ENCODE measurements at regions of chr9 and their contacts with region 1.

Region 1: GRCh38 chr9:124126571-124127289 is 115.2 kb downstream of the LHX2 start:
- DNase-seq: peak; percentile 93
- H3K4me3 Mint-ChIP-seq: no peak overlapping the region
- H3K27ac Mint-ChIP-seq: peak overlapping the region; percentile 57
- H3K4me1 Mint-ChIP-seq: peaks cover 6% of the 10 kb centered on the region
- H3K27me3 Mint-ChIP-seq: peaks cover 2% of the 10 kb centered on the region

Region 2: GRCh38 chr9:124149992-124150391 is 23.3 kb after region 1 on chr9:
- intact Hi-C with region 1: no loop called
- DNase-seq: peak; percentile 50
- H3K4me3 Mint-ChIP-seq: no peak overlapping the region
- H3K27ac Mint-ChIP-seq: no peak overlapping the region
- H3K4me1 Mint-ChIP-seq: peaks cover 9% of the 10 kb centered on the region
- H3K27me3 Mint-ChIP-seq: peaks cover 24% of the 10 kb centered on the region

Region 3: DNA sequence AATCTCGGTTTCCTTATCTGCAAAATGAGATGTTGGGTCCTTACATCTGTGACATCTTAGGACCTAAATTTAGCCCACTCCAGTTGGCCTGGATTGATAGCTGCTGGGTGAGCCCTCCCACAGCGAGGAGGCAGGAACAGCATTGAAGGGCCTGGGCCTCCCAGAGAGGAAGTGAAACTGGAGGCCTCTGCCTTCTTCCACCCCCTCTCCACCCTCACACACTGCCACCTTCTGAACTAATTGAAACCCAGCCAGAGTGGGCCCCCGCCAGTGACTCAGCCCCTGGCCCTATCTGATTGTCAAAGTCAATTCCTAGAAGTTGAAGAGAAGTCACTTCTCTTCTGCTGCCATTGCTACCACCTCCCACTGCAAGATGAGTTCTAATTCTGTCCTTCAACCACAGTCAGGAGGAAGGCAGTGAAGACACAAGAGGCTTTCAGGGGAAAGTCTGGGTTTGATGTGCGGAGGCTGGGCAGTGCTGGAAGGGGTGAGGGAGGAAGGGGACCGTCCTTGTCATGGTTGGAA is 75.8 kb after region 1 on chr9:
- intact Hi-C with region 1: loop called (anchors 5 kb)
- DNase-seq: peak; percentile 91
- H3K4me3 Mint-ChIP-seq: peak overlapping the region; percentile 75
- H3K27ac Mint-ChIP-seq: peak overlapping the region; percentile 94
- H3K4me1 Mint-ChIP-seq: peaks cover 65% of the 10 kb centered on the region
- H3K27me3 Mint-ChIP-seq: no peaks in the 10 kb centered on the region

Region 4: GRCh38 chr9:124320062-124320973 is 193.6 kb after region 1 on chr9:
- intact Hi-C with region 1: loop called (anchors 1 kb)
- DNase-seq: peak; percentile 82
- H3K4me3 Mint-ChIP-seq: no peak overlapping the region
- H3K27ac Mint-ChIP-seq: no peak overlapping the region
- H3K4me1 Mint-ChIP-seq: peaks cover 10% of the 10 kb centered on the region
- H3K27me3 Mint-ChIP-seq: no peaks in the 10 kb centered on the region

Region 5: GRCh38 chr9:124381170-124381945 is 254.6 kb after region 1 on chr9:
- intact Hi-C with region 1: loop called (anchors 10 kb)
- DNase-seq: no peak
- H3K4me3 Mint-ChIP-seq: no peak overlapping the region
- H3K27ac Mint-ChIP-seq: no peak overlapping the region
- H3K4me1 Mint-ChIP-seq: no peaks in the 10 kb centered on the region
- H3K27me3 Mint-ChIP-seq: no peaks in the 10 kb centered on the region